ENCODE measurements at regions of chr15 and their contacts with region 1.

Region 1: GRCh38 chr15:25799906-25800700 is 63.0 kb downstream of the ATP10A start:
- DNase-seq: no peak
- H3K4me3 ChIP-seq: no peak overlapping the region
- H3K27ac ChIP-seq: no peak overlapping the region
- H3K4me1 ChIP-seq: peaks cover 0 to 12% (median 2%) of the 10 kb centered on the region in 4 donors
- H3K27me3 ChIP-seq: no peaks in the 10 kb centered on the region
- CTCF ChIP-seq: no peak
- EP300 ChIP-seq: no peak
- POLR2A ChIP-seq: no peak

Region 2: DNA sequence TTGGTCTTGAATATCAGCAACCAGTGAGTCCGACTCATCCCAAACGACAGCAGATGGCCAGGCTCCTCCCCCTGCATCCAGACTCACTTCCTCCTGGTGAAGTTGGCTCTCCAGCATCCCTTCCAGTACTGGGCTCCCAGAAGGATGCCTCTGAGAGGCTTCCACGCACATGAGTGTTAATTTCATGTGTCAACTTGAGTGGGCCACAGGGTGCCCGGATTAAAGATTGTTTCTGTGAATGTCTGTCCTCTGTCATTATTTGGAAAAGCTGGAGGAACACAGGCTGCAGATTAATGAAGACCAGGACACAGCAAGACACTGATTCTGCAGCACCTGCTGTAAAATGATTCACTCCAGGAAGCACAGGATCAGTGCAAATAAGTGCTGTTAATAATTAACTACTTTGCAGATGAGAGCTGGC is 36.8 kb before region 1 on chr15:
- in situ Hi-C with region 1: no loop called
- intact Hi-C with region 1: loop called (anchors 1 kb)
- DNase-seq: no peak
- H3K4me3 ChIP-seq: no peak overlapping the region
- H3K27ac ChIP-seq: no peak overlapping the region
- H3K4me1 ChIP-seq: no peaks in the 10 kb centered on the region
- H3K27me3 ChIP-seq: no peaks in the 10 kb centered on the region
- CTCF ChIP-seq: no peak
- EP300 ChIP-seq: no peak
- POLR2A ChIP-seq: no peak

Measured in transverse colon (tissue), 4 donors.